ENCODE measurements at regions of chr18 and their contacts with region 1.

Region 1: DNA sequence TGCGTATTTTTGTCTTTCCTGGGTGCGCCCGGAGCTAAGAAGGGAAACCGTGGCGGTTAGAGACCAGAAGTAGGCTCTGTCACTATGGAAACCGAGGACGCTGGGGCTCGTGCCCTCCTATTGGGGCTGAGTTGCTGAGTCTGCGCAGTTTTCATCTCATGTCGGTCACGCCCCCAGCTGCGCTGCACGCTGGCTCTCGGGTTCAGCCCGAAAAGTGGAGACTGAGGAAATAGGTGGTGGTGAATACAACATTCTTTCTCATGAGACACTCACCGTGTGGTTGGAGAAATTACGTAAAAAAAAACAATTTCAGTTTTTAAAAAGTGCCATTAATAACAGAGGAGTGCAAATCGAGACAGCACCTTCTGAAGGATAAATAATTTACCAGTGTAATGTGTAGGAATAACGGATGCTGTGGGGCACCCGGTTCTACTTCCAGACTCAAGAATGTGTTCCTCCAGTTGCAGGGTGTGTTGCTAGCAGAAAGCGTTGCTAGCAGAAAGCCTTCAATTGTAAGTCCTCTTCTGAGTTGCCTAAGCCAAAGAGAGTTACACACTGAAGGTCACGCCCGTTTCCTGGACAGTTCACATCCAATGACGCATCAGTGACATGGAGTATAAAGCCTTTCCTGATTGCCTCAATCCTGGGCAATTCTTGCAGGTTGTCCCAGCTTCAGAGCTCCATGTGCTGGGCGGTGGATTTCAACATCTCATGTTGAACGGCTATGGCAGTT is 20.4 kb upstream of the CXXC1 start:
- DNase-seq: peak; percentile 85 to 93 (median 89)
- H3K4me3 ChIP-seq: peak overlapping the region; percentile 53 to 55
- H3K4me3 Mint-ChIP-seq: peak overlapping the region; percentile 91 to 97 (median 94)
- H3K27ac ChIP-seq: peak overlapping the region; percentile 7
- H3K27ac Mint-ChIP-seq: peak overlapping the region; percentile 61 to 94 (median 89)
- H3K4me1 ChIP-seq: peaks cover 15% of the 10 kb centered on the region
- H3K4me1 Mint-ChIP-seq: peaks cover 8 to 21% (median 14%) of the 10 kb centered on the region in 4 donors
- H3K27me3 ChIP-seq: no peaks in the 10 kb centered on the region
- H3K27me3 Mint-ChIP-seq: peaks cover 8 to 20% of the 10 kb centered on the region in 2 donors

Region 2: GRCh38 chr18:50266248-50266704 is 41.6 kb before region 1 on chr18 and contains the start of gene CFAP53:
- CTCF ChIA-PET with region 1: interaction called, 9 read pairs
- POLR2A ChIA-PET with region 1: interaction called, 7 read pairs
- intact Hi-C with region 1: loop called (anchors 1 kb)
- DNase-seq: peak; percentile 73 to 83 (median 77)
- H3K4me3 ChIP-seq: peak within 1 kb of the TSS; percentile 58 to 63
- H3K4me3 Mint-ChIP-seq: peak within 1 kb of the TSS; percentile 83 to 97 (median 90)
- H3K27ac ChIP-seq: peak within 1 kb of the TSS; percentile 49
- H3K27ac Mint-ChIP-seq: peak within 1 kb of the TSS; percentile 81 to 93 (median 90)
- H3K4me1 ChIP-seq: peaks cover 15% of the 10 kb centered on the region
- H3K4me1 Mint-ChIP-seq: peaks cover 11 to 23% (median 18%) of the 10 kb centered on the region in 4 donors
- H3K27me3 ChIP-seq: no peaks in the 10 kb centered on the region
- H3K27me3 Mint-ChIP-seq: no peaks in the 10 kb centered on the region
- total RNA-seq, gene CFAP53: 1.4 to 1.6 TPM

Region 3: DNA sequence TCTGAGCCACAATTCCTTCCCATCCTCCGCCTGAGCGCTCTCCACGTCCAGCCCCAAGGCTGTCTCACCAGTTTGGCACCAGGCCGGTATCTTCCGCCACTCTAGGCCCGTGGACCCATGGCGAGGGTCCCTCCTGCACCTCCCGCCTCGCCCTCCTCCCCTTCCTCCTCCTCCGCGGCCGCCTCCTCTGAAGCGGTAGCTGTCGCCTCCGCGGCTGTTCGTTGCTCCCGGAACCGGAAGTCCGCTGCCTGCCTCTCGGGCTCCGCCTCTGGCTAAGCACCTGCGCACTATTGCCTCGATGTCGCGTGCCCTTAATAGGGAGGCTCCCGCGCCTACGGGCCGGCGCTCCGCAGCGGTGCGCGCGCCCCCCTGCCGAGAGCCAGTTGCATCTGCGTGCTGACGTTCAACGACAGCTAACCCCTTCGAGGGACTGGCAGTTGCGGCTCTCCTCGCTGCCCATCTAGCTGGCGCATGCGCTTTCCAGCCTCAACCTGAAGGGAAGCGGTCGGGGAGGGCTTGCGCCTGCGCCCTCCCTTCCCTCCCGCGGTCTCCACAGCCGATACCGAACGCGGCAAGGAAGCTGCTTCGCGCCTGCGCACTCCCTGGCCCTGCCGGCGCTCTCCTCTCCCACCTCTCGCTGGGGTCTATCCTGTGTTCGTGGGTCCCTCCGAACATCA is 26.5 kb before region 1 on chr18 and contains the start of gene MBD1:
- CTCF ChIA-PET with region 1: interaction called, 4 read pairs
- POLR2A ChIA-PET with region 1: interaction called, 29 read pairs
- intact Hi-C with region 1: loop called (anchors 1 kb)
- DNase-seq: peak; percentile 97 to 99 (median 98)
- H3K4me3 ChIP-seq: peak within 1 kb of the TSS; percentile 45 to 97
- H3K4me3 Mint-ChIP-seq: peak within 1 kb of the TSS; percentile 96 to 99 (median 98)
- H3K27ac ChIP-seq: peak within 1 kb of the TSS; percentile 95
- H3K27ac Mint-ChIP-seq: peak within 1 kb of the TSS; percentile 88 to 99 (median 98)
- H3K4me1 ChIP-seq: peaks cover 36% of the 10 kb centered on the region
- H3K4me1 Mint-ChIP-seq: peaks cover 31 to 59% (median 47%) of the 10 kb centered on the region in 4 donors
- H3K27me3 ChIP-seq: no peaks in the 10 kb centered on the region
- H3K27me3 Mint-ChIP-seq: no peaks in the 10 kb centered on the region
- total RNA-seq, gene MBD1: 135 to 144 TPM

Region 4: GRCh38 chr18:50297621-50298442 is 10.1 kb before region 1 on chr18:
- CTCF ChIA-PET with region 1: no interaction called
- POLR2A ChIA-PET with region 1: interaction called, 11 read pairs
- intact Hi-C with region 1: loop called (anchors 1 kb)
- DNase-seq: peak; percentile 65 to 73 (median 70)
- H3K4me3 ChIP-seq: peak overlapping the region in 1 of 2 donors; percentile 36
- H3K4me3 Mint-ChIP-seq: peak overlapping the region; percentile 76 to 86 (median 81)
- H3K27ac ChIP-seq: no peak overlapping the region
- H3K27ac Mint-ChIP-seq: peak overlapping the region in 5 of 7 donors; percentile 25 to 90 (median 69)
- H3K4me1 ChIP-seq: peaks cover 11% of the 10 kb centered on the region
- H3K4me1 Mint-ChIP-seq: peaks cover 5 to 12% (median 7%) of the 10 kb centered on the region in 4 donors
- H3K27me3 ChIP-seq: peaks cover 6% of the 10 kb centered on the region
- H3K27me3 Mint-ChIP-seq: peaks cover 19 to 23% of the 10 kb centered on the region in 2 donors

Region 5: DNA sequence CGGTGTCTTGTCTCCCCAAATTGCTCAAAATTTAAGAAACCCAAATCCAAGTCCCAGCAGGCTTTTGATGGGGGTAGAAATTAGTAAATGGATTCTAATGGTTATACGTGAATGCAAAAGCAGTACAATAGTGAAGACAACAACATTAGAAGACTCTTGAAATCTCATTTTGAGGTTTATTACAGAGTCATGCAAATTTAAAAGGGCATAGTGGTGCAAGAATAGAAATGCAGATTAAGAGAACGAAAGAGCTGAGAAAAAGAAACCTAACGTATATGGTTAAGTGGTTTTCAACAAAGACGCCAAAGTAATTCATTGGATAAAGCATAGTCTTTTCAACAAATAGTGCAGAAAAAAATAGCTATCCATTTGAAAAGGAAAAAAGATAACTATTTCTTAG is 12.8 kb after region 1 on chr18:
- CTCF ChIA-PET with region 1: no interaction called
- POLR2A ChIA-PET with region 1: no interaction called
- intact Hi-C with region 1: no loop called
- DNase-seq: no peak
- H3K4me3 ChIP-seq: no peak overlapping the region
- H3K4me3 Mint-ChIP-seq: peak overlapping the region in 6 of 8 donors; percentile 1 to 49 (median 22)
- H3K27ac ChIP-seq: no peak overlapping the region
- H3K27ac Mint-ChIP-seq: no peak overlapping the region
- H3K4me1 ChIP-seq: no peaks in the 10 kb centered on the region
- H3K4me1 Mint-ChIP-seq: peaks cover 0 to 9% (median 7%) of the 10 kb centered on the region in 4 donors
- H3K27me3 ChIP-seq: no peaks in the 10 kb centered on the region
- H3K27me3 Mint-ChIP-seq: peaks cover 4 to 14% of the 10 kb centered on the region in 2 donors

Region 6: DNA sequence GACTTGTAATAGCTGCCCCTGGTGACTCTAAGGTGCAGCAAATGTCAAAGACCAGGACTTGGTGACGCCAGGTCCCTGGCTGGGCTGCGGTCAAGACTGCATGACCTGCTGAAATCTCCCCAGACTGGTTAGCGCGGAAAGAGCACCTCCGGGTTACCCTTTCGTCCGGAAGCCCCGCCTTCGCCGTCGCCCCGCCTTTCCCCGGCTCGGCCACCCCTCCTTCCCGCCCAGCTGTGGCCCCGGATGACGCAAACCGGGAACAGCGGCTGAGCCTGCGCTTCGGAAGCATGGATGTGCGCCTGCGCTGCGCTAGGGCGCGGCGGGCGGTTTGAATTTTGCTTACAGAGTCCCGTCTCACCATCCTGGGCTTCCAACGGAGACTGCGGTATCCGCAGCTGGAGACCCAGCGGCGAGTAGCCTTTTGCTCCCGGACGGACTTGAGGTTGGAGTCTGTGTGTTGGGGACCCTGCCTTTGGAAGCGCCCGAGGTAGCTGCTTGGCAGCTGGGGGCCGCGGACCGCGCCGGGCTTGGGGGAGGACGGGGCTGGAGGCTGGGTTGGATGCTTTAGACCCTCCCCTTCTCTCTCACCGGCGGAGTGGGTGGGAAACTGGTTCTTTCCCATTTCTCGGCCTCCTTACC is 67.0 kb after region 1 on chr18 and contains the start of gene SKA1:
- CTCF ChIA-PET with region 1: no interaction called
- POLR2A ChIA-PET with region 1: interaction called, 4 read pairs
- intact Hi-C with region 1: loop called (anchors 1 kb)
- DNase-seq: peak; percentile 89 to 91 (median 90)
- H3K4me3 ChIP-seq: peak within 1 kb of the TSS; percentile 60 to 63
- H3K4me3 Mint-ChIP-seq: peak within 1 kb of the TSS; percentile 79 to 85 (median 82)
- H3K27ac ChIP-seq: peak within 1 kb of the TSS; percentile 57
- H3K27ac Mint-ChIP-seq: peak within 1 kb of the TSS; percentile 81 to 94 (median 91)
- H3K4me1 ChIP-seq: peaks cover 14% of the 10 kb centered on the region
- H3K4me1 Mint-ChIP-seq: peaks cover 6 to 15% (median 11%) of the 10 kb centered on the region in 4 donors
- H3K27me3 ChIP-seq: peaks cover 5% of the 10 kb centered on the region
- H3K27me3 Mint-ChIP-seq: peaks cover 6 to 10% of the 10 kb centered on the region in 2 donors
- total RNA-seq, gene SKA1: 0.28 to 0.47 TPM